HepG2 (cell line): ENCODE measurements at regions of chr17 and their contacts with region 1.

Region 1: DNA sequence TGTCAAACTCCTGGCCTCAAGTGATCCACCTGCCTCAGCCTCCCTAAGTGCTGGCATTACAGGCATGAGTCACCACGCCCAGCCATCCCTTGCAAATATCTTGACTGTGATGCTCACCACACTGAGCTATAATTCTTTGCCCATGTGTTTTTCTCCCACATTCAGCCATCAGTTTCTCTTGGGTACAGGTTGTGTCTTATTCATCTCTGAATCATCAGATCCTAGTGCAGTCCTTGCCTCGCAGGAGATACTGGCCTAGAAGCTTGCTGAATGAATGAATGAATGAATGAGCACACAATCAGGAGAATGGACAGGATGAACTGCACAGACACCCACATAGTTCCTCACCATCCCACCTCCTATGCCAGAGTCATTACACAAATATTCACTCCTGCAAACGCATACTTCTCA is 24.4 kb upstream of the ETV4 start:
- DNase-seq: no peak
- ATAC-seq: no peak
- H3K4me3 ChIP-seq: no peak overlapping the region
- H3K27ac ChIP-seq: no peak overlapping the region
- H3K4me1 ChIP-seq: peaks cover 60% of the 10 kb centered on the region
- H3K27me3 ChIP-seq: no peaks in the 10 kb centered on the region
- CTCF ChIP-seq: no peak
- EP300 ChIP-seq: no peak
- POLR2A ChIP-seq: no peak
- RAD21 ChIP-seq: no peak

Region 2: GRCh38 chr17:43442711-43443110 is 127.8 kb before region 1 on chr17:
- CTCF ChIA-PET with region 1: no interaction called
- POLR2A ChIA-PET with region 1: no interaction called
- in situ Hi-C with region 1: no loop called
- intact Hi-C with region 1: no loop called
- DNase-seq: no peak
- ATAC-seq: no peak
- H3K4me3 ChIP-seq: no peak overlapping the region
- H3K27ac ChIP-seq: no peak overlapping the region
- H3K4me1 ChIP-seq: peaks cover 46% of the 10 kb centered on the region
- H3K27me3 ChIP-seq: no peaks in the 10 kb centered on the region
- CTCF ChIP-seq: no peak
- EP300 ChIP-seq: no peak
- POLR2A ChIP-seq: no peak
- RAD21 ChIP-seq: no peak

Region 3: GRCh38 chr17:43490621-43491020 is 79.9 kb before region 1 on chr17:
- CTCF ChIA-PET with region 1: no interaction called
- POLR2A ChIA-PET with region 1: no interaction called
- in situ Hi-C with region 1: no loop called
- intact Hi-C with region 1: no loop called
- DNase-seq: no peak
- ATAC-seq: no peak
- H3K4me3 ChIP-seq: no peak overlapping the region
- H3K27ac ChIP-seq: no peak overlapping the region
- H3K4me1 ChIP-seq: peaks cover 17% of the 10 kb centered on the region
- H3K27me3 ChIP-seq: no peaks in the 10 kb centered on the region
- CTCF ChIP-seq: no peak
- EP300 ChIP-seq: no peak
- POLR2A ChIP-seq: no peak
- RAD21 ChIP-seq: no peak

Region 4: DNA sequence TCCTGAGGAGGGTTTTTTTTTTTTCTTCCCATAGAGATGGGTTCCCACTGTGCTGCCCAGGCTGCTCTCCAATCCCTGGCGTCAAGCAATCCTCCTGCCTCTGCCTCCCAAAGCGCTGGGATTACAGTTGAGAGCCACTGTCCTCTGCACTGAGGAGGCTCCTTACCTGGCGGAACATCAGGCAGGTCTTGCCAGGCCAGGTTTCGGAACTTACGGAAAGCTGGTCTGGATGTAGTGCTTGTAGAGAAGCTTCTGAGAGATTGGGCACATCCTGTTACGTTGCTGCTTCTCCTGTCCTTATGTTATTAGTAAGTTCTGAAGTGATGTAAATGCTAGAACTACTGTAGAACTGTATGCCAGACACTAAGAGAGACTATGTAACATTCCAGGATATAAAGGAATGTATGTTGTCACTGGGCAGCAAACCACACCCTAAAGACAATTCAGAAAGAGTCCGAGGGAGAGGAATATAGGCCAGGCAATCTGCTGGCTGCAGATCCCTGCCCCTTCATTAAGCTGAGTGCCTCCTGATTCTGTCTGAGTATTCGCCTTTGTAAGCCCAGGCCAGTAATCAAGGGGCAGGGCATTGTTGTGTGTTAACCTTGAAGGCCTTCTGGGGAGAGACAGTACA is 45.5 kb before region 1 on chr17:
- CTCF ChIA-PET with region 1: no interaction called
- POLR2A ChIA-PET with region 1: interaction called, 221 read pairs
- in situ Hi-C with region 1: loop called (anchors 5 kb)
- intact Hi-C with region 1: loop called (anchors 1 kb)
- DNase-seq: no peak
- ATAC-seq: peak; percentile 1
- H3K4me3 ChIP-seq: no peak overlapping the region
- H3K27ac ChIP-seq: peak overlapping the region; percentile 96
- H3K4me1 ChIP-seq: peaks cover 68% of the 10 kb centered on the region
- H3K27me3 ChIP-seq: no peaks in the 10 kb centered on the region
- CTCF ChIP-seq: no peak
- EP300 ChIP-seq: no peak
- POLR2A ChIP-seq: no peak
- RAD21 ChIP-seq: no peak

Region 5: GRCh38 chr17:43530278-43531081 is 40.0 kb before region 1 on chr17:
- CTCF ChIA-PET with region 1: no interaction called
- POLR2A ChIA-PET with region 1: interaction called, 221 read pairs
- in situ Hi-C with region 1: loop called (anchors 5 kb)
- intact Hi-C with region 1: loop called (anchors 1 kb)
- DNase-seq: peak; percentile 100
- ATAC-seq: peak; percentile 74
- H3K4me3 ChIP-seq: peak overlapping the region in 2 of 3 experiments; percentile 26 to 58; a peak in 4 of 6 replicates
- H3K27ac ChIP-seq: peak overlapping the region; percentile 96
- H3K4me1 ChIP-seq: peaks cover 97% of the 10 kb centered on the region
- H3K27me3 ChIP-seq: no peaks in the 10 kb centered on the region
- CTCF ChIP-seq: peak; percentile 31; the same call in 1 of the 2 replicates
- EP300 ChIP-seq: peak; percentile 97 to 98
- POLR2A ChIP-seq: peak; percentile 82 to 93
- RAD21 ChIP-seq: peak; percentile 45

Region 6: GRCh38 chr17:43556292-43556691 is 14.2 kb before region 1 on chr17:
- CTCF ChIA-PET with region 1: no interaction called
- POLR2A ChIA-PET with region 1: interaction called, 60 read pairs
- in situ Hi-C with region 1: no loop called
- intact Hi-C with region 1: loop called (anchors 1 kb)
- DNase-seq: no peak
- ATAC-seq: no peak
- H3K4me3 ChIP-seq: no peak overlapping the region
- H3K27ac ChIP-seq: peak overlapping the region; percentile 45
- H3K4me1 ChIP-seq: peaks cover 100% of the 10 kb centered on the region
- H3K27me3 ChIP-seq: no peaks in the 10 kb centered on the region
- CTCF ChIP-seq: no peak
- EP300 ChIP-seq: no peak
- POLR2A ChIP-seq: no peak
- RAD21 ChIP-seq: no peak